HCT116 (cell line): ENCODE measurements at regions of chr14 and their contacts with region 1.

Region 1: DNA sequence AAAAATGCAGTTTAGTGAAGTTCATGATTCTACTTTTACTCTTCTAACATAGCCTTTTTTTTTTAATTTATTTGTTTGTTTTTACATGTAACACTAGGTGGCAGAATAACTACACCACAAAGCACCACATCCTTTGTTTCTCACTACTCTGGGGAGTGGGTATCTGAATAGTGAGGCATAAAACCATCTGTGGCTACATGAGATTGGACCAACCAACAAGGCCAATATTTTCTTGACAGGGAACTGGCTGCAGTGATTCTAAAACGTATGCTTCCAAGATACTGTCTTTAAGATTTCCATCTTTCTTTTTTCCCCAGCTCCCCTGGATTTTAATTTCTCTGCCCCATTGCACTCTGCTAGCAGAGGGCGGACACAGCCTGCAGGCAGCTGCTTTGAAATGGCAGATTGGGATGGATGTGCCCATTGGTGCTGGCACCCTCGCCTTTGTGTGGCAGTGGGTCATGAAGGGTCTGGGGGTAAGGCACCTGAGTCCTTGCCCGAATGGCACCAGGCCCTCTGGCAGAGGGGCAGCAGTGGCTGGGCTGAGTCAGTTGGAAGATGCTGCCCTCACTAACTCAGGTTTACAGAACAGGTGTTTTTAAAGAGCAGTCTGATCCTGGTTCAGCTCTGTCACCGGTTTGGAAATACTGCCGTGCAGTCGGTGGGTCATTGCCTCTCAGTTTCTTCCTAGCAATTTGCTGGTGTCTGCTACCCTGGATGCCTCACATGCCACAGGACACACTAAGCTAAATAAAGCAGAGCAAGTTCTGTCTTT is 429.1 kb downstream of the RAD51B start:
- DNase-seq: peak; percentile 28
- ATAC-seq: peak; percentile 32
- H3K4me3 ChIP-seq: peak overlapping the region in 1 of 2 experiments; percentile 17; a peak in 1 of 4 replicates
- H3K27ac ChIP-seq: peak overlapping the region; percentile 100
- H3K4me1 ChIP-seq: peaks cover 68 to 85% of the 10 kb centered on the region in 2 experiments
- H3K27me3 ChIP-seq: no peaks in the 10 kb centered on the region
- CTCF ChIP-seq: peak; percentile 42 to 80 (median 71); a peak in 5 of 6 replicates
- POLR2A ChIP-seq: no peak
- RAD21 ChIP-seq: peak; percentile 94

Region 2: DNA sequence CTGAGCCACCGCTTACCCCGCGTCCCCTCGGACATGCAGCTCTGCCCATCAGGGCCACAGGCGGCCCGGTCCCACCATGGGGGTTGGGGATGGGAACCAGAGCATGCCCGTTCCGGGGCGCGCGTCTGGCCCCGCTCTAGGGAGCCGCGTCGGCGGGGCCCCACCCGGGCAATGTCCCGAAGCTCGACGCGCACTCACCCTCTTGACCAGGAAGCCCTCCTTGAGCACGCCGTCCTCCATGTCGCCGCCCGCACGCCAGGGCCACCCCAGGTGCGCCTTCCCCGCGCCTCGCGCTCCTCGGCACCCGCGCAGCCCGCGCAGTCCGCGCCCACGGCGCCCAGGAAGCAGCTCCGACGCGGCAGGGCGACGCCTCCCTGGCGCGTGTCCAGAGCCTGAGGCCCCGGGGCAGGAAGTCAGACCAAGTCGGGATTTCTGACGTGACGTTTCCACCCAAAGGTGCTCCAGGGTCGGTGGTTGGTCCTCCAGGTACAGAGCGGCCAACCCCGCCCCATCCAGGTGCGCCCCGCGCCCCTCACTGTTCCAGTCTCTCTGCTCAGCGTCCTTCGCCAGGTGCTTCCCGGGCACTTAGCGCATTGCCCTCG is 836.7 kb before region 1 on chr14 and contains the start of gene PLEK2:
- CTCF ChIA-PET with region 1: no interaction called
- POLR2A ChIA-PET with region 1: no interaction called
- RAD21 ChIA-PET with region 1: no interaction called
- intact Hi-C with region 1: no loop called
- DNase-seq: peak; percentile 81
- ATAC-seq: peak; percentile 78
- H3K4me3 ChIP-seq: peak within 1 kb of the TSS; percentile 83 to 86
- H3K27ac ChIP-seq: peak within 1 kb of the TSS; percentile 62; the same call in 1 of the 2 replicates
- H3K4me1 ChIP-seq: peaks cover 36 to 44% of the 10 kb centered on the region in 2 experiments
- H3K27me3 ChIP-seq: no peaks in the 10 kb centered on the region
- CTCF ChIP-seq: no peak
- POLR2A ChIP-seq: peak; percentile 47
- RAD21 ChIP-seq: no peak
- total RNA-seq, gene PLEK2: 67.6 TPM

Region 3: GRCh38 chr14:68084256-68084655 is 164.4 kb before region 1 on chr14:
- CTCF ChIA-PET with region 1: no interaction called
- POLR2A ChIA-PET with region 1: interaction called, 3 read pairs
- RAD21 ChIA-PET with region 1: no interaction called
- intact Hi-C with region 1: loop called (anchors 5 kb)
- DNase-seq: no peak
- ATAC-seq: 0 out of 2 replicates have a peak, but pooled peaks have one; percentile 39
- H3K4me3 ChIP-seq: no peak overlapping the region
- H3K27ac ChIP-seq: peak overlapping the region; percentile 74
- H3K4me1 ChIP-seq: peaks cover 16 to 87% of the 10 kb centered on the region in 2 experiments
- H3K27me3 ChIP-seq: no peaks in the 10 kb centered on the region
- CTCF ChIP-seq: peak; percentile 15 to 45 (median 25); a peak in 3 of 6 replicates
- POLR2A ChIP-seq: no peak
- RAD21 ChIP-seq: peak; percentile 76

Region 4: GRCh38 chr14:68466491-68467032 is 217.9 kb after region 1 on chr14:
- CTCF ChIA-PET with region 1: no interaction called
- POLR2A ChIA-PET with region 1: no interaction called
- RAD21 ChIA-PET with region 1: no interaction called
- intact Hi-C with region 1: loop called (anchors 5 kb)
- DNase-seq: peak; percentile 78
- ATAC-seq: peak; percentile 55
- H3K4me3 ChIP-seq: peak overlapping the region; percentile 1 to 41
- H3K27ac ChIP-seq: peak overlapping the region; percentile 92
- H3K4me1 ChIP-seq: peaks cover 73 to 84% of the 10 kb centered on the region in 2 experiments
- H3K27me3 ChIP-seq: no peaks in the 10 kb centered on the region
- CTCF ChIP-seq: no peak
- POLR2A ChIP-seq: no peak
- RAD21 ChIP-seq: no peak

Region 5: GRCh38 chr14:68685419-68686204 is 436.9 kb after region 1 on chr14:
- CTCF ChIA-PET with region 1: no interaction called
- POLR2A ChIA-PET with region 1: no interaction called
- RAD21 ChIA-PET with region 1: interaction called in 1 of 2 experiments, 3 read pairs
- intact Hi-C with region 1: loop called (anchors 10 kb)
- DNase-seq: peak; percentile 86
- ATAC-seq: peak; percentile 79
- H3K4me3 ChIP-seq: peak overlapping the region in 1 of 2 experiments; percentile 2; a peak in 1 of 4 replicates
- H3K27ac ChIP-seq: peak overlapping the region; percentile 66
- H3K4me1 ChIP-seq: peaks cover 55 to 85% of the 10 kb centered on the region in 2 experiments
- H3K27me3 ChIP-seq: no peaks in the 10 kb centered on the region
- CTCF ChIP-seq: no peak
- POLR2A ChIP-seq: no peak
- RAD21 ChIP-seq: peak; percentile 13; the same call in 1 of the 2 replicates

Region 6: DNA sequence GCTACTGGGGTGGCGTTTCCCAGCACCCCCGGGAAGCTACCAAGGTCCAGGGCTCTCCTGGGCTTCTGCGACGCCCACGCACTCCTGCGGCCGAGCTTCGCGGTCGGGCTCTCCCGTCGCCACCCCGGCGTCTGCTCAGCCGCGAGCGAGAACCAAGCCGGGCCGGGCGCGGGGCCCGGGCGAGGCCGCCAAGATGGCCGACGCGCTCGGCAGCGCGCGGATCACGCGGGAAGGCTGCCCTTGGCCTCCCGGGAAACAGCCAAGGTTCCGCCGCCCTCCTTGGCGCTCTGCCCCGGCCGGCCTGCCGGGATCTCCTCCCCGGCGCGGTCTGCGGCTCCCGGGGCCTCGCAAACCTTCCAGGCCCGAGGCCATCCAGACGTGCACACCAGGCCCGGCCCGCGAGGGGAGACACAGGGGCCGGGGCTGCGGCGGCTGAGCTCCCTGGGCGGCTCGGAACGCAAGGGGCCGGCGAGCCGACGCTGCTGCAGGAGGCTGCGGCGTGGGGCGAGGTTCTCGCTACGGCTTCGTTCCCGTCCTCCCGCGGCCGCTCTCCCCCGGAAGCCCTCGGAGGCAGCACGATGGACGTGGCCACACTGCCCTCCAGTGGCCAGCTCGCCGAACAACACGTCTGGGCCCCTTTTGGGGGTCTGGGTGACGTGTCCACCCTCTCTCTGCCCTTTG is 567.7 kb after region 1 on chr14:
- CTCF ChIA-PET with region 1: interaction called, 48 read pairs
- POLR2A ChIA-PET with region 1: interaction called, 38 read pairs
- RAD21 ChIA-PET with region 1: interaction called, 4 to 9 read pairs
- intact Hi-C with region 1: loop called (anchors 1 kb)
- DNase-seq: no peak
- ATAC-seq: peak; percentile 69
- H3K4me3 ChIP-seq: peak overlapping the region; percentile 35 to 57
- H3K27ac ChIP-seq: peak overlapping the region; percentile 99
- H3K4me1 ChIP-seq: peaks cover 78 to 80% of the 10 kb centered on the region in 2 experiments
- H3K27me3 ChIP-seq: no peaks in the 10 kb centered on the region
- CTCF ChIP-seq: peak in 2 of 3 experiments; percentile 84 to 93; a peak in 4 of 6 replicates
- POLR2A ChIP-seq: no peak
- RAD21 ChIP-seq: no peak